ENCODE measurements at regions of chr17 and their contacts with region 1.

Region 1: GRCh38 chr17:39952680-39953470 is 9.9 kb upstream of the GSDMA start:
- DNase-seq: peak; percentile 89
- H3K4me3 ChIP-seq: peak overlapping the region in 2 of 3 experiments; percentile 23 to 35
- H3K27ac ChIP-seq: no peak overlapping the region
- H3K4me1 ChIP-seq: peaks cover 3% of the 10 kb centered on the region
- H3K27me3 ChIP-seq: peaks cover 0 to 3% of the 10 kb centered on the region in 2 experiments
- CTCF ChIP-seq: no peak
- POLR2A ChIP-seq: no peak

Region 2: GRCh38 chr17:39852239-39852638 is 100.6 kb before region 1 on chr17:
- CTCF ChIA-PET with region 1: no interaction called
- POLR2A ChIA-PET with region 1: no interaction called
- dilution Hi-C with region 1: no loop called
- intact Hi-C with region 1: no loop called
- DNase-seq: no peak
- H3K4me3 ChIP-seq: no peak overlapping the region
- H3K27ac ChIP-seq: no peak overlapping the region
- H3K4me1 ChIP-seq: no peaks in the 10 kb centered on the region
- H3K27me3 ChIP-seq: peaks cover 19 to 20% of the 10 kb centered on the region in 2 experiments
- CTCF ChIP-seq: no peak
- POLR2A ChIP-seq: no peak

Region 3: DNA sequence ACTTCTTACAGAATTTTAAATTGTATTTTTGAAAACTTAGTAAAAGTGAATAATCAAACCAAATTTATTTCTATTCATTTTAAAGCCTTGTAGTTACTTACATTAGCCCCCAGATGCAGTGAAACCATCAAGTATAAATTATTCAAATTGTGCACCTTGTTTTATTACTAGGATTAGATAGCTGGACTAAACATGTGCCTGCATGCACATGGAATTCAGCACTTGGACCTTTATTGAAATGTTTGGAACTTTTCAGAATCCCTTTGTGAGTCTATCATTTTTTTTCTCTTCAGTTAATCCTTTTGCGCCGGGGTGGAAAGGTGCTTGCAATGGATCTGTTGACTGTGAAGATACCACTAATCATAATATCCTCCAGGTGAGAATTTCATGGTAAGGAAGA is 80.1 kb before region 1 on chr17:
- CTCF ChIA-PET with region 1: interaction called, 4 read pairs
- POLR2A ChIA-PET with region 1: no interaction called
- dilution Hi-C with region 1: no loop called
- intact Hi-C with region 1: loop called (anchors 2 kb)
- DNase-seq: peak; percentile 19
- H3K4me3 ChIP-seq: no peak overlapping the region
- H3K27ac ChIP-seq: no peak overlapping the region
- H3K4me1 ChIP-seq: no peaks in the 10 kb centered on the region
- H3K27me3 ChIP-seq: peaks cover 16 to 31% of the 10 kb centered on the region in 2 experiments
- CTCF ChIP-seq: no peak
- POLR2A ChIP-seq: no peak

Region 4: DNA sequence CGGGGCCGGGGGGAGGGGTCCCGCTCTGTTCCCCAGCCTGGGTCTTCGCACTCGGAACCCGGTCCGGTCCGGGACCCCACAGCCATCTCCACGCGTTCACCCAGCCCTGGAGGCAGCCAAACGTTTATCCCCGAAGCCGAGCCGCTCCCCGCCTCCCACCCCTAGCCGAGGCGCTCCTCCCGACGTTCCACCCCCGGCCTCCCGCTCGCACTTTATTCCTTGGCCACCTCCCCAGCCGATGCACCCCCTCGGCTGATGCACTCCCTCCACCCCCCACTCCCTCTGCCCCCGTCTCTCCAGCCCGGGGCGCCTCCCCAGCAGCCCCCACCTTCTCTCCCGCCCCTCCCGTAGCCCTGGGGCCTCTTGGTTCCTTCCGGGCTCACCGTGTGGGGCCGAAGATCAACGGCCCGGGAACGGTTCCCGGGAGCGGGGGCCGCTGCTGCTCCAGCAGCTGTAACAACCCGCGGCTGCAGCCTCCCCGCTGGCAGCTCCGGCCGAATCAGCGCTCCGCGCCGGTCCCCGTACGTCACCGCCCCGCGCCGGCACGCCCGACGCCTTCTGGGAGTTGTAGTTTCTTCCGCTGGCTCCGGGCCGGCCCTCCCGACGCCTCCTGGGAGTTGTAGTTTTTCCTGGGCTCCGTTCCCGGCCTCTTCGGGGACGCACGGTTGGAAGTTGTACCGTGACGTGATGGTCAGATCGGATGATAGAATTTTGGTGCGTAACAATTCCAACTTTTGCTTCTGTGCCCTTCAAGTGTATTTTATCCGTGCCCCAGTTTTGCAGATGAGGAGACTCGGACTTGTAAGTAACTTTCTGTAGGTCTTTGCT is 25.6 kb before region 1 on chr17 and contains the starts of genes LRRC3C and ORMDL3:
- CTCF ChIA-PET with region 1: interaction called, 9 read pairs
- POLR2A ChIA-PET with region 1: no interaction called
- dilution Hi-C with region 1: no loop called
- intact Hi-C with region 1: loop called (anchors 1 kb)
- DNase-seq: peak; percentile 93
- H3K4me3 ChIP-seq: peak within 1 kb of the TSS; percentile 55 to 94 (median 91)
- H3K27ac ChIP-seq: peak within 1 kb of the TSS; percentile 100
- H3K4me1 ChIP-seq: peaks cover 43% of the 10 kb centered on the region
- H3K27me3 ChIP-seq: no peaks in the 10 kb centered on the region
- CTCF ChIP-seq: no peak
- POLR2A ChIP-seq: peak; percentile 70
- total RNA-seq, gene LRRC3C: not detected in 2 replicates
- total RNA-seq, gene ORMDL3: 26.7 and 29.8 TPM in 2 replicates

Region 5: DNA sequence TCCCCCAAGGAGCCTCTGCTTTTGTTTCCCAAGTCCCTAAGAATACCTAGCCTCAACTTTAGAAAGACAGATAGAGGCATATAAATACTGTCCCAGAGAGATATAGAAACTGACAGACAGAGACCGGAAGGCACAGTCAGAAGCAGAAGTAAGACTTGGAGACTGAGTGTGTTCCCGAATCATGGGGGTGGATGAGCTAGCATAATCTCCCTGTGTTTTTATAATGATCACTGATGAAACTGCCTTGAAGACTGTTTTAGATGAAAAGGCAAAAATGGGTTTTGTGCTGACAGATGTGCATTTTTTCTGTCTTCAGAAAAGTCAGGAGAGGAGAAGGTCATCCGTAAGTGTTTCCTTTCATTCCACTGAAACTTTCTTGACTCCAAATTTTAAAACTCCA is 19.4 kb after region 1 on chr17:
- CTCF ChIA-PET with region 1: interaction called, 108 read pairs
- POLR2A ChIA-PET with region 1: no interaction called
- dilution Hi-C with region 1: no loop called
- intact Hi-C with region 1: no loop called
- DNase-seq: no peak
- H3K4me3 ChIP-seq: no peak overlapping the region
- H3K27ac ChIP-seq: no peak overlapping the region
- H3K4me1 ChIP-seq: no peaks in the 10 kb centered on the region
- H3K27me3 ChIP-seq: peaks cover 19 to 34% of the 10 kb centered on the region in 2 experiments
- CTCF ChIP-seq: no peak
- POLR2A ChIP-seq: no peak

Region 6: DNA sequence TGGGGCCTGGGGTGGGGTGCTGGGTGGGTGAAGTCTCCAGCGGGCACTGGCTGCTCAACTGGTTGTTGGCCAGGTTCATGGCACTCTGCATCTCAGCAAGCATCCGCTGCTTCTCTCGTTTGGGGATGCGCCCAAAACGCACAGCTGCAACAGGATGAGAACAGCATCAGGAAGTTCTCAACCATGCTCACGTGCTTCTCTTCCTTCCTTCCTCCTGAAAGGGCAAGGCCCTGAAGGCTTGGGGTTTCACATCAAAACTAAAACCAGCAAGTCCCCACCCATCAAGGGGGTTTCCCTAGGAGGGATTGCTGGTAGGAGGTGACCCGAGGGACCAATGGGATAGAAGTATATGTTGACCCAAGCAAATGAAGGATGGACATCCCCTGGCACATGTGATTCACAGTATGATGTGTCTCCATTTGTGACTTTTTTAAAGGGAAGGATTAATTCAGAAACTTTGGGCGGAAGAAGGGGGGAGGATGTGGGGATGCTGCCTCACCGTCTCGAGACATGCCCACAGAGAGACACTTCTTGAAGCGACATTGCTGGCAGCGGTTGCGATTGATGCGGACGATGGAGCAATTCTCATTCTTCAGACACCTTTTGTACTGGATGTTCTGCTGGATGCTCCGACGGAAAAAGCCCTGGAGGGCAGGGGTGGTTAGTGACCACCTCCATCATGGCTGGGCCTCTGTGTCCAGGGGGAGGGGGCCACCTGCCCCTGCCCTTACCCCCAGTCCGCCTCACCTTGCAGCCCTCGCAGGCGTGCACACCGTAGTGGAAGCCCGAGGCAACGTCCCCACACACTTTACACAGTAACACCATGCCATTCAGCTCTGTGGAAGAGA is 143.3 kb after region 1 on chr17:
- CTCF ChIA-PET with region 1: no interaction called
- POLR2A ChIA-PET with region 1: no interaction called
- dilution Hi-C with region 1: no loop called
- intact Hi-C with region 1: no loop called
- DNase-seq: no peak
- H3K4me3 ChIP-seq: no peak overlapping the region
- H3K27ac ChIP-seq: no peak overlapping the region
- H3K4me1 ChIP-seq: peaks cover 30% of the 10 kb centered on the region
- H3K27me3 ChIP-seq: no peaks in the 10 kb centered on the region
- CTCF ChIP-seq: no peak
- POLR2A ChIP-seq: no peak

Region 7: DNA sequence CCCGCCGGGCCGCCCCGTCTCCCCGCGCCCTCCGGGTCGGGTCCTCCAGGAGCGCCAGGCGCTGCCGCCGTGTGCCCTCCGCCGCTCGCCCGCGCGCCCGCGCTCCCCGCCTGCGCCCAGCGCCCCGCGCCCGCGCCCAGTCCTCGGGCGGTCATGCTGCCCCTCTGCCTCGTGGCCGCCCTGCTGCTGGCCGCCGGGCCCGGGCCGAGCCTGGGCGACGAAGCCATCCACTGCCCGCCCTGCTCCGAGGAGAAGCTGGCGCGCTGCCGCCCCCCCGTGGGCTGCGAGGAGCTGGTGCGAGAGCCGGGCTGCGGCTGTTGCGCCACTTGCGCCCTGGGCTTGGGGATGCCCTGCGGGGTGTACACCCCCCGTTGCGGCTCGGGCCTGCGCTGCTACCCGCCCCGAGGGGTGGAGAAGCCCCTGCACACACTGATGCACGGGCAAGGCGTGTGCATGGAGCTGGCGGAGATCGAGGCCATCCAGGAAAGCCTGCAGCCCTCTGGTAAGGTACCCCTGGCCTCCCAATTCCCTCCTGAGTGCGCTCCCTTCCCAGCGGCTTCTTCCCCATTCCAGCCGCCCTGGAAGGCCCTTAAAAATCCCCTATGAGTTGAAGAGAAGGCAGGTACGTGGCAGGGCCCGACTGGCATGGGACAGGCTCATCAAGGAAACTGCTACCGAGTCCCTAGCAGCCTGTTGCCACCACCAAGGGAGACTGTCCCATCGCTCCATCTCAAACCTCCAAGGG is 490.9 kb after region 1 on chr17:
- CTCF ChIA-PET with region 1: no interaction called
- POLR2A ChIA-PET with region 1: no interaction called
- dilution Hi-C with region 1: no loop called
- intact Hi-C with region 1: no loop called
- DNase-seq: peak; percentile 69
- H3K4me3 ChIP-seq: peak overlapping the region; percentile 51 to 92 (median 58)
- H3K27ac ChIP-seq: peak overlapping the region; percentile 43
- H3K4me1 ChIP-seq: peaks cover 40% of the 10 kb centered on the region
- H3K27me3 ChIP-seq: no peaks in the 10 kb centered on the region
- CTCF ChIP-seq: peak; percentile 45 to 76
- POLR2A ChIP-seq: no peak

Measured in endothelial cell of umbilical vein (primary cell).